H1 (cell line): ENCODE measurements at regions of chr16 and their contacts with region 1.

Region 1: DNA sequence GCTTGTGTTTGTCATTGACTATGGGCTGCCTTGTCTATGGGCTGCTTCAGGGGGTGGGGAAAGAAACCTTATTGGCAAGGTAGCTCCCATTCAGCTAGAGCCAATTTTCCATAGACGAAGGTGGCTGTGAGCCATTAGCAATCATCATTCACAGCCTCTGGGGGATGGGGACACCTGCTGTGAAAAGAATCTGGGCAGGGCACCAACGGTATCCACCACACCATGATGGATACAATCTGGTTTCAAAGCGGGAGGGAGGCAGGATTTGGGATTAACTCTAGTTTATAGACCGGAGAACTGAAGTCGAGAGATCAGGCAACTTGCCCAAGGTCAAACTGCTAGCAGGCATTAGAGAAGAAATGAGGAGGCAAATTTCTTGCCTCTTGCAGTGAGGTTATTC is 182.3 kb downstream of the SHISA9 start:
- DNase-seq: no peak
- H3K4me3 ChIP-seq: no peak overlapping the region
- H3K27ac ChIP-seq: no peak overlapping the region
- H3K4me1 ChIP-seq: peaks cover 3 to 9% (median 7%) of the 10 kb centered on the region in 4 experiments; a peak in 6 of 7 replicates
- H3K27me3 ChIP-seq: no peaks in the 10 kb centered on the region
- CTCF ChIP-seq: no peak
- EP300 ChIP-seq: no peak
- POLR2A ChIP-seq: no peak
- RAD21 ChIP-seq: no peak

Region 2: GRCh38 chr16:12995721-12996372 is 87.8 kb before region 1 on chr16:
- CTCF ChIA-PET with region 1: no interaction called
- POLR2A ChIA-PET with region 1: no interaction called
- DNase-seq: no peak
- H3K4me3 ChIP-seq: no peak overlapping the region
- H3K27ac ChIP-seq: no peak overlapping the region
- H3K4me1 ChIP-seq: peaks cover 0 to 3% (median 1%) of the 10 kb centered on the region in 4 experiments; a peak in 2 of 7 replicates
- H3K27me3 ChIP-seq: no peaks in the 10 kb centered on the region; a peak in 1 of 7 replicates
- CTCF ChIP-seq: no peak
- EP300 ChIP-seq: no peak
- POLR2A ChIP-seq: no peak
- RAD21 ChIP-seq: no peak

Region 3: DNA sequence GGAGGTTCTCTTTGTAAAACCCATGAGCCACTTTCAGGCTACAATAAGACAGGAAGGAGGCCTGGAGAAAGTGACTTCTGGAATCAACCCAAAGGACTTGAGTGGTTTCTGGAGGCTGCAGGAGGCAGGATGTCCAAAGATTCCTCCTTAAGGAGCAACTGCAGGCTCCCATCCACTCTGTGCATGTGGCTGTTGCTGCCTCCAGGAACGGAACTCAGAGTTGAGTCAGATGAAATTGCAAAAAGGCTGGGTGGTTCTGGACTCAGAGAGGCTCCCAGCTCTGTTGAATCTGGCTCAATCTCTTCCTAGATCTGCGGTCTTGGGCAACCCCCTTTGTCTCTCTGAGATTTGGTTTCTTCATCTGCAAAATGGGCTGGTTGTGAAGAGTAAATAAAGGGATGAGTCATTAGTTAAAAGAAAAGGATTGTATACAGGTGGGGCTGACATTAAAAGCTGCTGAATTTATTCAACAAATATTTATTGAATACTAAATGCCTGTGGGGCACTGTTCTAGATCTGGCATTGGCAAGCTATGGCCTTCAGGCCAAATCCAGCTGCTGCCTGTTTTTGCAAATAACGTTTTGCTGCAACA is 15.0 kb after region 1 on chr16:
- CTCF ChIA-PET with region 1: interaction called, 11 read pairs
- POLR2A ChIA-PET with region 1: no interaction called
- DNase-seq: no peak
- H3K4me3 ChIP-seq: no peak overlapping the region
- H3K27ac ChIP-seq: no peak overlapping the region
- H3K4me1 ChIP-seq: peaks cover 3 to 14% (median 8%) of the 10 kb centered on the region in 4 experiments; a peak in 6 of 7 replicates
- H3K27me3 ChIP-seq: no peaks in the 10 kb centered on the region
- CTCF ChIP-seq: no peak
- EP300 ChIP-seq: no peak
- POLR2A ChIP-seq: no peak
- RAD21 ChIP-seq: no peak

Region 4: DNA sequence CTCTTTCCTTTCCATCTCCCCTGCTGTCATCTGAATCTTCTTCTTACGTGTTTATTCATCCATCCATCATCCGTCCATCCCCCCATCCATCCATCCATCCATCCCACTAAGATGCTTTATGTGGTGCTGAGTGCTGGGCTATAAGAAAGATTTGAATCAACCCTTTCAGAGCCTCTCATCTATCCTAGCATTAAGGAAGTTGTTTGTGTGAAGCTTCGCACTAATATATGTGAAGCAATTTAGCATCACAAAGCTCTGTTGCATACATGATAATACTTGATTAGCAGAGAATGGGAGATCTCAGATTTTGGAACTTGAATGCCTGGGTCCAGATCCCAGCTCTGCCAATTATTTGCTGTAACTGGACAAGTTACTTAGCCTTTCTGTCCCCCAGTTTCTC is 73.4 kb after region 1 on chr16:
- CTCF ChIA-PET with region 1: no interaction called
- POLR2A ChIA-PET with region 1: no interaction called
- DNase-seq: no peak
- H3K4me3 ChIP-seq: peak overlapping the region in 2 of 4 experiments; percentile 1 to 3; a peak in 1 of 8 replicates
- H3K27ac ChIP-seq: 0 out of 2 replicates have a peak overlapping the region, but pooled peaks have one; percentile 49
- H3K4me1 ChIP-seq: peaks cover 5 to 39% (median 20%) of the 10 kb centered on the region in 4 experiments
- H3K27me3 ChIP-seq: no peaks in the 10 kb centered on the region
- CTCF ChIP-seq: no peak
- EP300 ChIP-seq: no peak
- POLR2A ChIP-seq: no peak
- RAD21 ChIP-seq: no peak